Ovary (tissue), 10 donors: ENCODE measurements at regions of chr9 and their contacts with region 1.

Region 1: DNA sequence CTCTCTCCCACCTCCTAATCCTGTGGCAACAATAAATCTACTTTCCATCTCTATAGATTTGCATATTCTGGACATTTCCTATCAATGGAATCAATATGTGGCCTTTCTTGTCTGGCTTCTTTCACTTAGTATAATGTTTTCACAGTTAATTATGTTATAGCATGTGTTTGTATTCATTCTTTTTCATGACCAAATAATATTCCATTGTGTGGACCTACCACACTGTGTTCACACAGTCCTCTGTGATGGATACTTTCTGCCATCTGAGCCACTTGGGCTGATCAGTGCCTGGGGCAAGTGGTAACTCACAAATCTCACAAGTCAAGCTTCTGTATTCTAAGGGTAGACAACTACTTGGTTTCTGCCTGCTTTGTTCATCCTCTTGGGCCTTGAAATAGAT is 48.7 kb upstream of the POMT1 start:
- DNase-seq: no peak
- H3K4me3 ChIP-seq: no peak overlapping the region
- H3K27ac ChIP-seq: no peak overlapping the region
- H3K4me1 ChIP-seq: no peaks in the 10 kb centered on the region
- H3K27me3 ChIP-seq: no peaks in the 10 kb centered on the region
- CTCF ChIP-seq: no peak
- EP300 ChIP-seq: no peak
- POLR2A ChIP-seq: no peak

Region 2: DNA sequence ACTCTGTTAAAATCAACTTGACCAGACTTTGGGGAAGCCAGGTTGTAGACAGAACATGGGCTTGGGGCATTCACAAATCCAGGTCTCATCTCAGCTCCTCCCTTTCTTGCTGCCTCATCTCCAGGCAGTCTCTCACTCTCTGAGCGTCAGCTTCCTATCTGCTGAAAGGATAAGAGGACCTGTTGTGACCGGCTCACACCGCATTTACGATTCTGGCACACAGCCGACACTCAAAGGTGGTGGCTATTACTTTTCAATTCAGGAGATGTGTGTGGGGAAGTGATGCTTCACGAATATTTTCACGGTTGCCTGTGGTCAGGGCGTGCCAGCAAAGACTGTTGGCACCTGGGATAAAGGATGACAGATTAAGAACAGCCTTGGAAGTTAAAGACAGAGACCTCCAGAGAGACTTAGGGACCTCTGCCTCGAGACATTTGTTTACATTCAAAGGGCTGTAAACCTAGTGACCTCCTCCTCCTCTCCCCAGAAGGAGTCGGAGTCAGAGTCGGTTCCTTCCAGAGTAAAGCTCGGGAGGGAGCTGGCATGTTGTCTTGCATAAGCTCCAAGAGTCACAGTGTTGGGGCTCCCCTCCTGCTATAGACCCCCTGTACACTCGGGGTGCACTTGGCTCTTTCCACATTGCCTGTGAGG is 1340.8 kb after region 1 on chr9:
- intact Hi-C with region 1: loop called in 1 of 4 experiments (anchors 5 kb)
- DNase-seq: no peak
- H3K4me3 ChIP-seq: no peak overlapping the region
- H3K27ac ChIP-seq: no peak overlapping the region
- H3K4me1 ChIP-seq: peaks cover 11% of the 10 kb centered on the region
- H3K27me3 ChIP-seq: no peaks in the 10 kb centered on the region
- CTCF ChIP-seq: no peak
- EP300 ChIP-seq: no peak
- POLR2A ChIP-seq: no peak